Activated CD8-positive, alpha-beta T cell treated with anti-CD3 and anti-CD28 coated beads for 36 hours (primary cell): ENCODE measurements at regions of chr11 and their contacts with region 1.

Region 1: DNA sequence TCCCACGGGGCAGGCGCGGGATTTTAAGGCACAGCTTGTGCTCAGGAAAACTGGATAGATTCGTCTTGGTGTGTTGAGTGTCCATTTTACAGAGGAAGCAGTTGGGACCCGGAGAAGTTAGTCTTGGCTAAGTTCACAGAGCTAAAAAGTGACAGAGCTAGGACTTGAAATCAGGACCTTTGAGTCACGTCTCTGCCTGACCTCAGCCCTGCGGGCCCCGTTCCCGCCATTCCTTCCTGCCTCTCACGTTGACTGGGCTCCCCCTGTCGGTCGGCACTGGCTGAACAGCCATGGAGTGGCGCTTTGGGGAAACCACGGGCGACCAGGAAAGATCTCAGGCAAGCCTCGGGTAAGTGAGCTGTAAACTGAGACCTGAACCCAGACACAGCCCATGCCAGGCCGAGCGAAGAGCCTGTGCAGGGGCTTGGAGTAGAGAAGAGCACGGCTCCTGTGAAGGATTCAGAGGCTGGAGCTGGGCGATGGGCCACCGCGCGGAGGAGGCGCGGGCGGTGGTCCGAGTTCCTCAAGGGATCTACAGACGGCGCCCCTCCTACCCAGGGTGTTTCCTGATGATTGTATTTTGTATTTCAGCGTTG is 54.1 kb downstream of the WNT11 start:
- DNase-seq: peak; percentile 95
- ATAC-seq: peak; percentile 98
- H3K4me3 Mint-ChIP-seq: peak overlapping the region; percentile 61
- H3K27ac Mint-ChIP-seq: peak overlapping the region; percentile 63
- H3K4me1 Mint-ChIP-seq: peaks cover 25% of the 10 kb centered on the region
- H3K27me3 Mint-ChIP-seq: peaks cover 9% of the 10 kb centered on the region
- CTCF ChIP-seq: peak; percentile 96

Region 2: GRCh38 chr11:75802913-75803820 is 349.0 kb before region 1 on chr11:
- CTCF ChIA-PET with region 1: interaction called, 17 read pairs
- POLR2A ChIA-PET with region 1: no interaction called
- intact Hi-C with region 1: loop called (anchors 5 kb)
- DNase-seq: peak; percentile 84
- ATAC-seq: peak; percentile 99
- H3K4me3 Mint-ChIP-seq: no peak overlapping the region
- H3K27ac Mint-ChIP-seq: no peak overlapping the region
- H3K4me1 Mint-ChIP-seq: no peaks in the 10 kb centered on the region
- H3K27me3 Mint-ChIP-seq: no peaks in the 10 kb centered on the region
- CTCF ChIP-seq: peak; percentile 84

Region 3: GRCh38 chr11:75873417-75874221 is 278.6 kb before region 1 on chr11:
- CTCF ChIA-PET with region 1: interaction called, 19 read pairs
- POLR2A ChIA-PET with region 1: no interaction called
- intact Hi-C with region 1: no loop called
- DNase-seq: no peak
- ATAC-seq: peak; percentile 17
- H3K4me3 Mint-ChIP-seq: no peak overlapping the region
- H3K27ac Mint-ChIP-seq: peak overlapping the region; percentile 63
- H3K4me1 Mint-ChIP-seq: peaks cover 23% of the 10 kb centered on the region
- H3K27me3 Mint-ChIP-seq: no peaks in the 10 kb centered on the region
- CTCF ChIP-seq: no peak

Region 4: DNA sequence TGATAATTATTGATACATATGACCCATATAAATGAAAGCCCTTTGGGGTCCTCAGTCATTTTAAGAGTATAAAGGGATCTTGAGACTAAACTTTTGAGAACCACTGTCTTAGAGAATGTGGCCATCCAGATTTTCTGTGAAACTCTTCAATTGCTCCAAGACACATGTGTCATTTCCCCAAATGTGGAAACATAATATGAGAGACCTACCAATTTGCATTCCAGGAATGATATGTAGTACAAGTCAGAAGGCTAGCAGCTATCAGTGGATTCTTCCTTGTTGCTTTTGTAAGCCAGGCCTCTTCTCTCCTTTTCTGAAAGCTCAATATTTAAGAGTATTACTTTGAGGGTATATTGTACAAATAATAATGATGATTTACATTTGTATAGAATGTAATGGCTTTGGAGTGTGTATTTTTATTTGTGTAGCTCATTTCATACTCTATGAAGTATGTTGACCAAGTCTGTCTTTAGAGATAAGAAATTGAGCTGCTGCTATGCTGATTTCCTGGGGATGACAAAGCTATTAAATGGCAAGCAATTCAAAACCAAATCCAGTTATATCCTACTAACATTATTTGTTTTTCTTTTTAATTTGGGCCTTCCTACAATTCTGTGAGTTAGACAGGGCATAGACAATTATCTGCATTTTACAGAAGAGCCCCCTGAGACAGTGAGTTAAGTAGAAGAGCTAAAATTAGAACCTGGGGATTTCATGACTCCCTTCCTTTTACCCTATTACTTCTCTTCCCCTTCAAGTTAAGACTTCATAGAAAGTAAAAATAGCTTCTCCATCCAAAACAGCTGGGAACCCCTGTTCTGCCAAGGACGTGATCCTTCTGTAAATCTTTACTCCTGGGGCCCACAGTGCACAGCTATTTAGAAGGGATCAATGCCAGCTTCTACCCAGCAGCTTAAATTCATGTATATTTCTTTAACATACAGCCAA is 77.8 kb before region 1 on chr11:
- CTCF ChIA-PET with region 1: interaction called, 12 read pairs
- POLR2A ChIA-PET with region 1: no interaction called
- intact Hi-C with region 1: no loop called
- DNase-seq: no peak
- ATAC-seq: no peak
- H3K4me3 Mint-ChIP-seq: no peak overlapping the region
- H3K27ac Mint-ChIP-seq: no peak overlapping the region
- H3K4me1 Mint-ChIP-seq: peaks cover 13% of the 10 kb centered on the region
- H3K27me3 Mint-ChIP-seq: no peaks in the 10 kb centered on the region
- CTCF ChIP-seq: no peak

Region 5: DNA sequence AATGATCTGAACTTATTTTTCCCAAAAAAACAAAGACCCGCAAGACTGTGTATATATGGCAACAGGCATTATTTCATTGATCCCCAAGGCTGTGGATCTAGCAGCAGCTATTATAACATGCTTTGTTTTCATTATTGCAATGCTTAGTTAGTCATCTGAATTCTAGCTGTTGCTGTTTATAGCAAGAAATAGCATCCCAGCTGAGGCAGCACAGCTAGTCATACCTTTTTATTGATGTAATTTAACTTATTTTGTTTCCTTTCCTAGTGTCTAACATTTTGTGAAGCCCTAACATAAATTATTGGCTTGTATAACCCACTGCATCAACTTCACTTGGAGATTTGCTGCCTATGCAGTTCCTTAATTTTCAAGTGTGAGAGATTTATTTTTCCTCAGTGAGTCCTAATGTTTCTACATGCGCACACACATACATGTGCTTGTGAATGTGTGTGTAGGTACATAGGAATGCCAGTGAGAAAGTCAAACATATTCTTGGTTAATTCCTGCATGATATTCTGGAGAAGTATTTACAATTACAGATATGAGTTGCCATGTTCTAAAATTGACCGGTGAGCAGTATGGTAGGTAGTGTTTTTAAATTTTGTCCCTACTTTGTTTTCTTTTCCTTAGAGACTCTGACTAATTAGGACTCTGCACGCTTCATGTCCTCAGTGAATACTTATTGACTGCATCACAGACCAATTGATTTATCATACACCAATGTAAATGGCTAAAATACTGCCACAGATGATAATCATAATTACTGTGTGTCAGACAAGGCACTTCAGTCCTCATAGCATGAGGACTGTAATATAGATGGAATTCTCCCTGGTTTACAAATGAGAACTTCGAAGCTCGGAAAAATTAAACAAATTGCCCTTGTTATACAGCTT is 65.2 kb before region 1 on chr11:
- CTCF ChIA-PET with region 1: no interaction called
- POLR2A ChIA-PET with region 1: no interaction called
- intact Hi-C with region 1: no loop called
- DNase-seq: no peak
- ATAC-seq: no peak
- H3K4me3 Mint-ChIP-seq: no peak overlapping the region
- H3K27ac Mint-ChIP-seq: no peak overlapping the region
- H3K4me1 Mint-ChIP-seq: no peaks in the 10 kb centered on the region
- H3K27me3 Mint-ChIP-seq: no peaks in the 10 kb centered on the region
- CTCF ChIP-seq: no peak

Region 6: GRCh38 chr11:76114238-76114637 is 37.9 kb before region 1 on chr11:
- CTCF ChIA-PET with region 1: interaction called, 19 read pairs
- POLR2A ChIA-PET with region 1: no interaction called
- intact Hi-C with region 1: no loop called
- DNase-seq: no peak
- ATAC-seq: no peak
- H3K4me3 Mint-ChIP-seq: no peak overlapping the region
- H3K27ac Mint-ChIP-seq: no peak overlapping the region
- H3K4me1 Mint-ChIP-seq: no peaks in the 10 kb centered on the region
- H3K27me3 Mint-ChIP-seq: no peaks in the 10 kb centered on the region
- CTCF ChIP-seq: no peak

Region 7: DNA sequence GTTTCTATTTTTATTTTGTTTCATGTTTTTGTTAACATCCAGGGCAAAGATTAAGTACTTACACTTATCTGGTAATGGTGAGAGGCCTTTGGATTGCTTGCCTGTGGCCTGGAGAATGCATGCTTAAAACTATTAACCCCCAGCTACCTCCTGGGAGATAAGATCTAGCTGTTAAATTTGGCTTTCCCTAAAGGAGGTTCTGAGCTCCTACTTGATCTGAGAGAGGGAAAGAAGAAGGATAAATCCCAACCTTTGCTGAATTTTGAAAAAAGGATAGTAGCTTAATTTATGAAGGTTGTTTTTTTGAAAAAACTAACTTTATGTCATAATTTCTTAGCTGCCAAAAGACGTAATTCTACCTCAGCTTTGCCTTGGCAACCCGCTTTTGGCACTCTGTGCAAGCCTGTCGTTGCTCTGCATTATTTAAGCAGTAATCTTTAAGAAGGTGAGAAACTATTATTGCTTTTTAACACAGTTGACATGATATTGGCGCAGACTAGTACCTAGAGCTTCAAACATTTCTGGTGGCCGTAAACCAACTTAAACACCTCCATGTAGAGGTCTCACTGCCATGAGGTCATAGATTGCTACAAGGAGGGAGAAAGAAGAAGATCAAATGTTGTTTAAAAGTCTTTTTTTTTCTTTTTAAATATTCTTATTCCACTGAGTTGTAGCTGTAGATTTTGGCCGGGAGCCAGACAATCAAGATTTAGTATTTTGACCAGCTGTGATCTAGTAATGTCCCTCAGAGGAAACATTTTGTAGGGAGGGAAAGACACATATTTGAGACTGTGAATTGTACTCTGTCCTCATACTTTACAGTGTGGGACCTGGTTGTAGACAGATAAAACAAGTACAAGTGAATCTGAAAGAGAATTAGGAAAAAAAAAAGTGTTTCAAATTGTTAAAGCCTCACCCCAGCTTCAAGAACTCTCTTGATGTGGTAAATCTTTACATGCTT is 20.2 kb before region 1 on chr11:
- CTCF ChIA-PET with region 1: interaction called, 36 read pairs
- POLR2A ChIA-PET with region 1: no interaction called
- intact Hi-C with region 1: no loop called
- DNase-seq: no peak
- ATAC-seq: peak; percentile 71
- H3K4me3 Mint-ChIP-seq: no peak overlapping the region
- H3K27ac Mint-ChIP-seq: no peak overlapping the region
- H3K4me1 Mint-ChIP-seq: peaks cover 31% of the 10 kb centered on the region
- H3K27me3 Mint-ChIP-seq: no peaks in the 10 kb centered on the region
- CTCF ChIP-seq: no peak

Region 8: DNA sequence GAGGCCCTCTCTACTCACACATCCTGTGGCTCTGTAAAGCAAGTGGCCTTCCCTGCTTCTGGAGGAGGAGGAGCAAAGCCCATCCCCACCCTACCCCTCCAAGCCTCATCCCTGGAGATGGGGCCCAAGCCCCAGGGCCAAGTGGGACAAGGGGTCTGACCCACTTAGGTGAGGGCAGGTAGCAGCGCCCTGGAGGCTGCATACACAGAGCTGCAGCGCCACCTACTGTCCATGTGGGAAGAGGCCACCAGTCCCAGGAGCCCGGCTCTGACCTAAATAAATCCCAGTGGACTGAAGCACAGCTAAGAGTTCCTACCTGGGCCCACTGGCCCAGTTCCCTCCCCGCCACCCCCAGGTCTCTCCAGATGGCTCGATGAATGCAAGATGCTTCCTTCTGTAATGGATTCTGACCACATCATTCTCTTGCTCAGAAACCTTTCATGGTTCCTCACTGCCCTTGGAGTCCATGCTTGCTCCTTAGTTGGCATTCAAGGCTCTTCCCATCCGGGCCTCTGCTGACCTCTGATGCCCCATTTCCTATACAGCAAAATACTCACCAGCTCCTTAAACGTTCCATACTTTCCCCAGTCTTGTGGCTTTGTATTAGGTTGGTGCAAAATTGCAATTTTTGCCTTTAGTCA is 166.7 kb after region 1 on chr11:
- CTCF ChIA-PET with region 1: interaction called, 15 read pairs
- POLR2A ChIA-PET with region 1: no interaction called
- intact Hi-C with region 1: no loop called
- DNase-seq: peak; percentile 91
- ATAC-seq: peak; percentile 98
- H3K4me3 Mint-ChIP-seq: no peak overlapping the region
- H3K27ac Mint-ChIP-seq: no peak overlapping the region
- H3K4me1 Mint-ChIP-seq: no peaks in the 10 kb centered on the region
- H3K27me3 Mint-ChIP-seq: peaks cover 37% of the 10 kb centered on the region
- CTCF ChIP-seq: peak; percentile 88

Region 9: GRCh38 chr11:76615950-76616349 is 463.8 kb after region 1 on chr11:
- CTCF ChIA-PET with region 1: no interaction called
- POLR2A ChIA-PET with region 1: no interaction called
- intact Hi-C with region 1: no loop called
- DNase-seq: no peak
- ATAC-seq: no peak
- H3K4me3 Mint-ChIP-seq: no peak overlapping the region
- H3K27ac Mint-ChIP-seq: no peak overlapping the region
- H3K4me1 Mint-ChIP-seq: no peaks in the 10 kb centered on the region
- H3K27me3 Mint-ChIP-seq: peaks cover 5% of the 10 kb centered on the region
- CTCF ChIP-seq: no peak

Region 10: DNA sequence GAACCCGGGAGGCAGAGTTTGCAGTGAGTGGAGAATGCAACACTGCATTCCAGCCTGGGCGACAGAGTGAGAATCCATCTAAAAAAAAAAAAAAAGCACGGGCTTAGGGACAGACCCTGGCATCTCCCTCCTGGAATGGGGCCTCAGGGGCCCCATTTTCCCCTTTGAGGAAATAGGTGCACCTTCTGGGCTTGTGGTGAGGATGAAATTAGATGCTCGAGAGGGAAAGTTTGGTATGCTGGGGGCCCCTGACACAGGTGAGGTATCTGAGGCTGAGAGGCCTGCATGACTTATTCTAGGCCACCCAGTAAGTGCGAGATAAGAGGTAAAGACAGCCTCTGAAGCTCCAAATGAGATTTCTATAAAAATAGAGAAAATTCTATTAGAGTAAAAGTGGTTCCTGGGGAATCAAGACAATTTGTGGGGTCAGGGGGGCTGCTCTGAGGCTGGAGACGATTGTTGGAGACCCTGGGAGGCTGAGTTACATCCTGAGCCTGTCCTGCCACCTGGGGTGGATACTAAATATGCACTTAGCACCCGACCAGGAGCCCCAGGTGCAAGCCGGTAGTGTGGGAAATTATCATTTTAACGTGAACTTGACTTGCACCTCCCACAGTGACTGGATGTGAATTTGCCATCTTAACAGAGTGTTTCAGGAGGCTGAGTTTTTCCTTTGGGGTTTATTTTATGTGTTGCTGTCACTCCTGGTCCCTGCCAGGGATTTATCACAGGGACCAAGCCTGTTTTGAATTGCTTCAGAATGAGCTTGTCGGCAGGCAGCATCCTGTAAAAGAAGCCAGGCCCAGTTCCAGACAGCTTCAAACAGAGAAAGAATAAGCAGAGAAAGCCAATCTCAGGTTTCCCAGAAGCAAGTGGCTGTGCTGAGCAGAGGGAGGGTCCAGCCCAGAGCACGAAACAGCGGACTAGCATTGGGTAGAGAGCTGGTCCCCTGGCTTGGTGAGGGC is 582.6 kb after region 1 on chr11:
- CTCF ChIA-PET with region 1: no interaction called
- POLR2A ChIA-PET with region 1: no interaction called
- intact Hi-C with region 1: no loop called
- DNase-seq: no peak
- ATAC-seq: no peak
- H3K4me3 Mint-ChIP-seq: no peak overlapping the region
- H3K27ac Mint-ChIP-seq: no peak overlapping the region
- H3K4me1 Mint-ChIP-seq: no peaks in the 10 kb centered on the region
- H3K27me3 Mint-ChIP-seq: no peaks in the 10 kb centered on the region
- CTCF ChIP-seq: no peak